Activated CD4-positive, alpha-beta T cell treated with anti-CD3 and anti-CD28 coated beads, Interleukin-2, amount 10 ng/mL, durations not matched to agents 24 days and 14 days (primary cell): ENCODE measurements at regions of chr5 and their contacts with region 1.

Region 1: DNA sequence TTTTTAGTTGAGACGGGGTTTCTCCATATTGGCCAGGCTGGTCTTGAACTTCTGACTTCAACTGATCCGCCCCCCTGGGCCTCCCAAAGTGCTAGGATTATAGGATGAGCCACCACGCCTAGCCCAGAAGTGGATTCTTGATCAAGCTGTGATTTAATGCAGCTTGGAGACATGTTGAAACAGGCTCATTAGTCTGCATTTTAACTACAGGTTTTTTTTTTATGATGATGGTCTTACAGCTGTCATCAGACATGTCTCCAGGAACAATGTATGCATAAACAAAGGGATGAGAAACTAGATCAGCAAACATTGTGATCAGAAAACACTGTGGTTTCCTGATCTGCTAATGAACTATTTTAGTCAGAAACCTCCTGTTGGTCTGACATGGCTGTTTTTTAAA is 30.0 kb upstream of the PLPP1 start:
- DNase-seq: no peak
- H3K4me3 Mint-ChIP-seq: no peak overlapping the region
- H3K27ac Mint-ChIP-seq: peak overlapping the region; percentile 34
- H3K4me1 Mint-ChIP-seq: peaks cover 9% of the 10 kb centered on the region
- H3K27me3 Mint-ChIP-seq: no peaks in the 10 kb centered on the region

Region 2: DNA sequence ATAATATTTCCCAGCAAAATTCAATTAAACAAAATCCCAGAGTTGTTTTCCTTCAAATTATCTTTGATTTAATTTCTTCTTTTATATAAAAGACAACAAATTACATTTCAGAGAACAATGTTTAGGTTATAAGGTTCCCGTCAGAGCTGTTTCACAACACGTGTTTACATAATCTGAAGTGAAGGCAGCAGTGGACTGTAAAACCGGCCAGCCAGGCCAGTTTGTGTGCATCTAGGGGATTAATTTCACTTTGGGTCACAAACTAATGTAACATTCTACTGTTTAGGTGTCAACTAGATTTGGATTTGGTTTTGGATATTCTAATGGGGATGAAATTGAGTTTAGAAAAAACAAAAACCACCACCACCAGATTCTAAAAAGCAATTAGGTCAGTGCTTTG is 56.5 kb after region 1 on chr5:
- intact Hi-C with region 1: loop called (anchors 10 kb)
- DNase-seq: no peak
- H3K4me3 Mint-ChIP-seq: no peak overlapping the region
- H3K27ac Mint-ChIP-seq: no peak overlapping the region
- H3K4me1 Mint-ChIP-seq: peaks cover 11% of the 10 kb centered on the region
- H3K27me3 Mint-ChIP-seq: no peaks in the 10 kb centered on the region

Region 3: GRCh38 chr5:55850839-55851674 is 286.3 kb after region 1 on chr5 and contains the start of gene IL31RA:
- intact Hi-C with region 1: no loop called
- DNase-seq: no peak
- H3K4me3 Mint-ChIP-seq: no peak within 1 kb of the TSS
- H3K27ac Mint-ChIP-seq: peak within 1 kb of the TSS; percentile 14
- H3K4me1 Mint-ChIP-seq: peaks cover 49% of the 10 kb centered on the region
- H3K27me3 Mint-ChIP-seq: no peaks in the 10 kb centered on the region
- total RNA-seq, gene IL31RA: 0.63 and 0.92 TPM in 2 replicates